Activated CD8-positive, alpha-beta T cell treated with anti-CD3 and anti-CD28 coated beads, Interleukin-2, amount 10 ng/mL, durations not matched to agents 7 days and 5 days (primary cell): ENCODE measurements at regions of chr4 and their contacts with region 1.

Region 1: GRCh38 chr4:51906167-51906958 is 63.4 kb downstream of the DCUN1D4 start:
- DNase-seq: no peak
- ATAC-seq: no peak
- H3K4me3 Mint-ChIP-seq: no peak overlapping the region
- H3K27ac Mint-ChIP-seq: no peak overlapping the region
- H3K4me1 Mint-ChIP-seq: peaks cover 6% of the 10 kb centered on the region
- H3K27me3 Mint-ChIP-seq: no peaks in the 10 kb centered on the region

Region 2: DNA sequence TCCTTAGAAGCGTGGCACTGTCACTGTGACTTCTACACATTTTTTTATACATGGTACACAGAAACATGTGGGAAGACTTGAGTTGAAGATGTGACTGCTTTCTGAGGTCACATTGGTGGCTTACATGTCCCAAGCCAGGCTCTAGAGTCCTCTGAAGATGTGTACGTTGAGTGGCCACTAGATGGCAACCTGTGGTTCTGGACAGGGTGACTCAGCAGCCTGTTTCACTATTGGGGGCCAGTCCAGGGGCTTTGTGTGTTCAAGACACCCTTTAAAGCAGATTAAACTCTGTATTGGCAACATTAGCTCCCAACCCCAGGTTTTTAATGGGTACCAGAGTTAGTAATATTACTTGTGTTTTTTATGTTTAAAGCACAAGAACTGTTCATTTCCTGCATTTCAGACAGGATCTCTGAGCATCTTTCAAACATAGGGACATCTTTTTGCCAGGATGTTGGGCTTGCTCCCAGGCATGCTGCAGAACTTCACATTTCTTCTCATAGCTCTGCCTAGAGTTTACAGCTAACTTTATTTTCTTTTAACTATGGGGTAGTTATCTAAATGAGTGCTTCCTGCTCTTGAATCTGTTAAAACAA is 10.5 kb before region 1 on chr4:
- CTCF ChIA-PET with region 1: interaction called, 16 read pairs
- POLR2A ChIA-PET with region 1: no interaction called
- DNase-seq: peak; percentile 69
- ATAC-seq: peak; percentile 99
- H3K4me3 Mint-ChIP-seq: no peak overlapping the region
- H3K27ac Mint-ChIP-seq: no peak overlapping the region
- H3K4me1 Mint-ChIP-seq: peaks cover 23% of the 10 kb centered on the region
- H3K27me3 Mint-ChIP-seq: no peaks in the 10 kb centered on the region

Region 3: GRCh38 chr4:52894443-52894842 is 988.1 kb after region 1 on chr4:
- CTCF ChIA-PET with region 1: no interaction called
- POLR2A ChIA-PET with region 1: no interaction called
- DNase-seq: peak; percentile 47
- ATAC-seq: peak; percentile 44
- H3K4me3 Mint-ChIP-seq: no peak overlapping the region
- H3K27ac Mint-ChIP-seq: no peak overlapping the region
- H3K4me1 Mint-ChIP-seq: peaks cover 35% of the 10 kb centered on the region
- H3K27me3 Mint-ChIP-seq: no peaks in the 10 kb centered on the region